ENCODE measurements at regions of chrX and their contacts with region 1.

Region 1: GRCh38 chrX:130179579-130180215 is 7.9 kb downstream of the RAB33A start:
- DNase-seq: no peak
- H3K4me3 ChIP-seq: no peak overlapping the region
- H3K27ac ChIP-seq: no peak overlapping the region
- H3K4me1 ChIP-seq: no peaks in the 10 kb centered on the region
- H3K27me3 ChIP-seq: no peaks in the 10 kb centered on the region
- CTCF ChIP-seq: no peak
- POLR2A ChIP-seq: no peak

Region 2: DNA sequence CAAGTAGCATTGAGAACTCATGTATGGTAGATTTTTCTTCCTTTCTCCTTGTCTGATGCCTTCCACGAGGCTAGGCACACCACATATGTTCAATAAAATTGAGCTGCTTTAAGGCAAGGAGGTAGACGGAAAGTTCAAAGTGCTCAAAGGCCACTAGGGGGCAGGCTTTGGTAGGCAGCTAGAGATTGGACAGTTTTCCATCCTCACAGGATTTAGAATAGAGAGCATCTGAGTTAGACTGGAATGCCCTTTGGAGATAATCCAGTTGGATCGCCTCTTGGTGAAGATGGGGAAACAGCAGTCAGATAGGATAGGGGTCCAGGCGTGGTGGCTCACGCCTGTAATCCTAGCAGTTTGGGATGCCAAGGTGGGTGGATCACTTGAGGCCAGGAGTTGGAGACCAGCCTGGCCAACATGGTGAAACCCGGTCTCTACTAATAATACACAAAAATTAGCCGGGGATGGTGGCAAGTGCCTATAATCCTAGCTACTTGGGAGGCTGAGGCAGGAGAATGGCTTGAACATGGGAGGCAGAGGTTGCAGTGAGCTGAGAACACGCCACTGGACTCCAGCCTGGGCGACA is 99.8 kb before region 1 on chrX:
- intact Hi-C with region 1: loop called (anchors 10 kb)
- DNase-seq: peak; percentile 69
- H3K4me3 ChIP-seq: no peak overlapping the region
- H3K27ac ChIP-seq: no peak overlapping the region
- H3K4me1 ChIP-seq: no peaks in the 10 kb centered on the region
- H3K27me3 ChIP-seq: no peaks in the 10 kb centered on the region
- CTCF ChIP-seq: peak; percentile 66 to 74 (median 67)
- POLR2A ChIP-seq: no peak